ENCODE measurements at regions of chr18 and their contacts with region 1.

Region 1: GRCh38 chr18:55781481-55781957 is 193.5 kb upstream of the TCF4 start:
- DNase-seq: no peak
- H3K4me3 ChIP-seq: no peak overlapping the region
- H3K27ac ChIP-seq: no peak overlapping the region
- H3K4me1 ChIP-seq: no peaks in the 10 kb centered on the region
- H3K27me3 ChIP-seq: no peaks in the 10 kb centered on the region
- CTCF ChIP-seq: peak; percentile 33 to 48 (median 37)

Region 2: DNA sequence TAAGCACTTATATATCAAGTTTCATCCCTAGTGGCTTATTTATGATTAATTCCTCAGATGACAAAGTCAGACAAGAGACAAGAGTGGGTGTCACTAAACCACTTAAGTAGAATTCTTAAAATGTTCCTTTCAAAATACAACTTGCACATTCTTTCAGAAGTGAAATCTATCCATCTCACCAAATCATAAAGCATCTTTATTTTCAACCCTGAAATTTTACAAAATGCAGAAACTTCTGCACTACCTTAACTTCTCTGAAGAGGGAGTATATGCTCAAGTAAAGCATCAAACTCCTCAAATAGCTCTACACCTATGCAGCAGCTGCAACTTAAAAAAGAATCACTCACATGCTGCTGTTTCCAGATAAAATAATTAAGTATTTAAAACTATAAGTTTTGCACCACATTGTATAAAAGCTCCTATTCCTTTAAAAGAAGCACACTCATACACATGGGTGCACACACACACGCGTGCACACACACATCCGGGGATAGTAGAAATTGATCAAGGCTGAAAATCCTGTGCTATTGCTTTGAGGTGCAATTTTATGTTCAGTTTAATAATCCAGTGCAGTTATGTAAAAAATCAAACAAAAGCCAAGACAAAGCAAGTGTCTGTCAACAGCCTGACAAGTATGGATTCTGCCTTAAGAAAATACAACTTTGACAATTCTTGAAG is 438.0 kb before region 1 on chr18:
- intact Hi-C with region 1: loop called (anchors 2 kb)
- DNase-seq: no peak
- H3K4me3 ChIP-seq: no peak overlapping the region
- H3K27ac ChIP-seq: no peak overlapping the region
- H3K4me1 ChIP-seq: peaks cover 0 to 7% of the 10 kb centered on the region in 2 donors
- H3K27me3 ChIP-seq: no peaks in the 10 kb centered on the region
- CTCF ChIP-seq: peak; percentile 32 to 69 (median 67)

Region 3: GRCh38 chr18:55415258-55415871 is 366.2 kb before region 1 on chr18:
- intact Hi-C with region 1: loop called (anchors 2 kb)
- DNase-seq: peak; percentile 22 to 92
- H3K4me3 ChIP-seq: no peak overlapping the region
- H3K27ac ChIP-seq: no peak overlapping the region
- H3K4me1 ChIP-seq: no peaks in the 10 kb centered on the region
- H3K27me3 ChIP-seq: no peaks in the 10 kb centered on the region
- CTCF ChIP-seq: peak; percentile 60 to 90 (median 85)

Region 4: GRCh38 chr18:55753643-55754263 is 27.8 kb before region 1 on chr18:
- intact Hi-C with region 1: no loop called
- DNase-seq: no peak
- H3K4me3 ChIP-seq: no peak overlapping the region
- H3K27ac ChIP-seq: no peak overlapping the region
- H3K4me1 ChIP-seq: no peaks in the 10 kb centered on the region
- H3K27me3 ChIP-seq: no peaks in the 10 kb centered on the region
- CTCF ChIP-seq: no peak

Region 5: GRCh38 chr18:56402872-56403516 is 621.5 kb after region 1 on chr18:
- intact Hi-C with region 1: loop called (anchors 10 kb)
- DNase-seq: peak in 1 of 2 donors; percentile 73
- H3K4me3 ChIP-seq: no peak overlapping the region
- H3K27ac ChIP-seq: peak overlapping the region; percentile 69 to 72
- H3K4me1 ChIP-seq: no peaks in the 10 kb centered on the region
- H3K27me3 ChIP-seq: no peaks in the 10 kb centered on the region
- CTCF ChIP-seq: no peak

Measured in ascending aorta (tissue), 2 donors.